Activated CD4-positive, alpha-beta memory T cell treated with anti-CD3 and anti-CD28 coated beads, Interleukin-2, amount 10 ng/mL, durations not matched to agents 7 days and 5 days (primary cell): ENCODE measurements at regions of chr15 and their contacts with region 1.

Region 1: DNA sequence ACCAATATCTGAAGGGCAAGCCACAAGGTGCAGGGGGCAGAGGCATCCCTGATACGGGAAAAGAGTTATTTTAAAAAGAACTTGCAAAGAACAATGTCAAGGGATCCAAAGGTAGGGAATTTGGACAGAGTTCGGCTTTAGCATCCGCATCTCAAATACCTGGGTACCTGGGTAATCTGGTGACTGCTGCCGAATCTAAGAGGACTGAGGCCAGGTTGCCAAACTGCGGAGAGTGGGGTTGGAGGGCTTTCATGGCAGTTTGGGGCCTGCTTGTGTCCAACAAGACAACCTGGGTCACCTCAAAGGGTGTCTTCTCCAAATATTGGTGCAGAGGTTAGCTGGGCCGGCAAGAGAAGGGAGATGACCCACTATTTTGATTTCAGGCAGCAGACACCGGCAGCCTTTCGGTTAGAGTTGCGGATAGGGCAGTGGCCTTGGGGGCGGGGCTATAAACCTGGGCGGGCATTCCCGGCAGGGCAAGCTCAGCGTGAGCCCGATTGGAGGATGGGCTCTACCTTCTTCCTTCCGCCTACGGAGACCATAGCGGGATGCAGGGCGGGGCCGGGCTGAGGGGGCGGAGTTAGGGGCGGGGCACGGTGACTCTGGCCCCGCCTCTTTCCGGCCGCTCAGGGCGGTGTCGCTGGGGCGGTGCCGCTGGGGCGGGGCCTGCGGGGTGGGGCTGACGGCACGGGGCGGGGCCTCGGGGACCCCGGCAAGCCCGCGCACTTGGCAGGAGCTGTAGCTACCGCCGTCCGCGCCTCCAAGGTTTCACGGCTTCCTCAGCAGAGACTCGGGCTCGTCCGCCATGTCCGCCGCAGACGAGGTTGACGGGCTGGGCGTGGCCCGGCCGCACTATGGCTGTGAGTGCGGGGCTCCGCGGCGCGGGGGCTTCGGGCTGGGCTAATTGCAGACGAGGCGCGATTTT is at the start of gene IQGAP1:
- DNase-seq: peak; percentile 97
- H3K4me3 Mint-ChIP-seq: peak within 1 kb of the TSS; percentile 92
- H3K27ac Mint-ChIP-seq: peak within 1 kb of the TSS; percentile 92
- H3K4me1 Mint-ChIP-seq: peaks cover 48% of the 10 kb centered on the region
- H3K27me3 Mint-ChIP-seq: no peaks in the 10 kb centered on the region
- total RNA-seq, gene IQGAP1: 229 to 240 TPM

Region 2: DNA sequence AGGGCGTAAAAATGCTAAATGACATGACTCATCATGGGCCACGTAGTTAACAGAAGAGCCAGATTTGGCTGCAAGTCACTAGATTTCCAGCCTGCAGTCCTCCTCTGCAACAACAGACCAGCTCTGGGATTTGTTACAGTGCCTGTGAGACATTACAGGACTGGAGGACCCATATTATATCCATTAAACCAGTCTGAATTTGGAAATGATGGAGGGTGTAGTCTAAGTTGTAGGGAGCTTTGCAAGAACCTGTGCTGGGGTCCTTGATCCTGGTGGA is 24.9 kb before region 1 on chr15:
- CTCF ChIA-PET with region 1: interaction called, 47 read pairs
- POLR2A ChIA-PET with region 1: interaction called, 81 read pairs
- DNase-seq: no peak
- H3K4me3 Mint-ChIP-seq: no peak overlapping the region
- H3K27ac Mint-ChIP-seq: peak overlapping the region; percentile 58
- H3K4me1 Mint-ChIP-seq: peaks cover 37% of the 10 kb centered on the region
- H3K27me3 Mint-ChIP-seq: no peaks in the 10 kb centered on the region

Region 3: GRCh38 chr15:90400406-90401314 is 12.9 kb after region 1 on chr15:
- CTCF ChIA-PET with region 1: interaction called, 10 read pairs
- POLR2A ChIA-PET with region 1: interaction called, 78 read pairs
- DNase-seq: peak; percentile 72
- H3K4me3 Mint-ChIP-seq: peak overlapping the region; percentile 63
- H3K27ac Mint-ChIP-seq: peak overlapping the region; percentile 91
- H3K4me1 Mint-ChIP-seq: peaks cover 63% of the 10 kb centered on the region
- H3K27me3 Mint-ChIP-seq: no peaks in the 10 kb centered on the region

Region 4: DNA sequence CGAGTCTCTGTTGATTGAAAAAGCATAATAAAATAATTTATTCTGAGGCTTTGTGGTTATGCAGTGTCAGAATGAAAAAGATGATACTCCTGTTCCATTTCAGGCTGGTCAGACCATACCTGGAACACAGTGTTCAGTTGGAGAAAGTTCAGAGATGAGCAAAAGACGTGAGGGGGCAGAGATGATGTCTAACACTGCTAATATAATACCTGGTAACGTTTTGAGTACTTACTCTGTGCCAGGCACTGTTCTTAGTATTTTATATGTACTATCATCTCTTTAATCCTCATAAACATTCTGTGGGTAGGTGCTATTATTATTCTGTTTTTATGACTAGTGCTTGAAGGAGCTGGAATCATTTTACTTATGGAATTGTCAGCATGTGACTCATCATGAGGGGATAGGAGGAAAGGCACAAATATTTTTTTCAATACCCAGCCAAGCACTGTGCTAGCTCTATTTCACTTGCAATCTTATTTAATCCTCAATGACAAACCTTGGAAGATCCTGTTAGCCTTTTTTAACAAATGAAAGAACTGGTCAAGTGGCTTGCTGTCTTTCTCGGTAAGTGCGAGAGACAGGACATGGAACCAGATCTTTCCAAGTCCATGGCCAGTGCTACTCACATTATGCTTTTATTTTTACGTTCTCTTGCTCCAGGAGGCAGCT is 32.1 kb after region 1 on chr15:
- CTCF ChIA-PET with region 1: interaction called, 7 read pairs
- POLR2A ChIA-PET with region 1: interaction called, 26 read pairs
- DNase-seq: peak; percentile 35
- H3K4me3 Mint-ChIP-seq: peak overlapping the region; percentile 26
- H3K27ac Mint-ChIP-seq: peak overlapping the region; percentile 82
- H3K4me1 Mint-ChIP-seq: peaks cover 64% of the 10 kb centered on the region
- H3K27me3 Mint-ChIP-seq: no peaks in the 10 kb centered on the region